A673 (cell line): ENCODE measurements at regions of chr1 and their contacts with region 1.

Region 1: GRCh38 chr1:115807723-115808122 is 33.2 kb downstream of the NHLH2 start:
- DNase-seq: peak; percentile 85
- H3K4me3 ChIP-seq: no peak overlapping the region
- H3K27ac ChIP-seq: no peak overlapping the region
- H3K4me1 ChIP-seq: no peaks in the 10 kb centered on the region
- H3K27me3 ChIP-seq: no peaks in the 10 kb centered on the region
- CTCF ChIP-seq: peak; percentile 82

Region 2: DNA sequence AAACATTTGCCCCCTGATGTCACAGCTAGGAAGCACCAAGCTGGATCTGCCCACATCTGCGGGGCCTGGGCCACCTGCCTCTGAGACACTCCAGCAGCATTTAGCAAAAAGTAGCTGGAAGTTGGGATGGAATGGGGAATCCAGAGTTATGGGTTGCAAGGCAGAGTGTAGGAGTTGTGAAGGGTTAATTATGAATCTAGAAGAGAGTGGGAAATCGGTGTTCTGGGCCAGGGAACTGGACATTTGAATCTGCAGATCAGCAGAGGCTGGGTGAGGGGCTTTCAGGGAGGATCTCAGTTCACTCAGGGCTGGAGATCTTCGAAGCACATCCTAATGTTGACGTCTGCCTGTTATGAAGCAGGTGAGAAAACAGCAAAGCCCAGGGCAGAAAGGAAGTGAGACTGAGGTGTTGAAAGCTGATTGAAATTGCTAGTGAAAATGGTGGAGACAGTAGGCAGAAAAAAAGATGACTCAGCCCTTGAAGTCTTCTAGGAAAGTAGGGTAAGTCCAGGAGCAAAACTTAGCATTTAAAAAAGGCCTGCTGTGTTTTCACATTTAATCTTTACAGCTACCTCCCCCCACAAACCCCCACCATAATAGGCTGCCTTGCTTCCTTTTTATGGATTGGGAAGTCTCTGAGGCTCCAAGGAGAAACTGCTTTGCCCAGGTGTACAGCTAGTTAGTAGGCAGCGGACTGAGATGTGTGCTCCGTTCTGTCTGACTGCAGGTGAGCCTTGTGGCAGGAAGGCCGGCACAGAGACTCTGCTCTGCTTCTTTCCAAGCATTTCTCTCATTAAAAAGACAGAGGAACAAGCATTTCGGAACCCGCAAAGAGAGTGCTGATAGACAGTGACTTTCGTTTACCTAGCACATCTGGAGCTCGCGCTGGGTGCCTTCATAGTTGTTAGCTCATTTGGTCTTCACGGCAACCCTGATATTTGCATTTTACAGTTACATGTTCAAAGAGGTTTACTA is 158.7 kb before region 1 on chr1:
- CTCF ChIA-PET with region 1: no interaction called
- POLR2A ChIA-PET with region 1: interaction called, 14 read pairs
- intact Hi-C with region 1: no loop called
- DNase-seq: no peak
- H3K4me3 ChIP-seq: no peak overlapping the region
- H3K27ac ChIP-seq: peak overlapping the region; percentile 2
- H3K4me1 ChIP-seq: peaks cover 31% of the 10 kb centered on the region
- H3K27me3 ChIP-seq: no peaks in the 10 kb centered on the region
- CTCF ChIP-seq: no peak

Region 3: GRCh38 chr1:115748401-115749150 is 59.1 kb before region 1 on chr1:
- CTCF ChIA-PET with region 1: no interaction called
- POLR2A ChIA-PET with region 1: no interaction called
- intact Hi-C with region 1: no loop called
- DNase-seq: no peak
- H3K4me3 ChIP-seq: no peak overlapping the region
- H3K27ac ChIP-seq: no peak overlapping the region
- H3K4me1 ChIP-seq: no peaks in the 10 kb centered on the region
- H3K27me3 ChIP-seq: peaks cover 5% of the 10 kb centered on the region
- CTCF ChIP-seq: no peak

Region 4: GRCh38 chr1:115980998-115981993 is 173.6 kb after region 1 on chr1:
- CTCF ChIA-PET with region 1: interaction called, 4 read pairs
- POLR2A ChIA-PET with region 1: no interaction called
- intact Hi-C with region 1: loop called (anchors 1 kb)
- DNase-seq: peak; percentile 70
- H3K4me3 ChIP-seq: no peak overlapping the region
- H3K27ac ChIP-seq: no peak overlapping the region
- H3K4me1 ChIP-seq: no peaks in the 10 kb centered on the region
- H3K27me3 ChIP-seq: no peaks in the 10 kb centered on the region
- CTCF ChIP-seq: peak; percentile 82

Region 5: DNA sequence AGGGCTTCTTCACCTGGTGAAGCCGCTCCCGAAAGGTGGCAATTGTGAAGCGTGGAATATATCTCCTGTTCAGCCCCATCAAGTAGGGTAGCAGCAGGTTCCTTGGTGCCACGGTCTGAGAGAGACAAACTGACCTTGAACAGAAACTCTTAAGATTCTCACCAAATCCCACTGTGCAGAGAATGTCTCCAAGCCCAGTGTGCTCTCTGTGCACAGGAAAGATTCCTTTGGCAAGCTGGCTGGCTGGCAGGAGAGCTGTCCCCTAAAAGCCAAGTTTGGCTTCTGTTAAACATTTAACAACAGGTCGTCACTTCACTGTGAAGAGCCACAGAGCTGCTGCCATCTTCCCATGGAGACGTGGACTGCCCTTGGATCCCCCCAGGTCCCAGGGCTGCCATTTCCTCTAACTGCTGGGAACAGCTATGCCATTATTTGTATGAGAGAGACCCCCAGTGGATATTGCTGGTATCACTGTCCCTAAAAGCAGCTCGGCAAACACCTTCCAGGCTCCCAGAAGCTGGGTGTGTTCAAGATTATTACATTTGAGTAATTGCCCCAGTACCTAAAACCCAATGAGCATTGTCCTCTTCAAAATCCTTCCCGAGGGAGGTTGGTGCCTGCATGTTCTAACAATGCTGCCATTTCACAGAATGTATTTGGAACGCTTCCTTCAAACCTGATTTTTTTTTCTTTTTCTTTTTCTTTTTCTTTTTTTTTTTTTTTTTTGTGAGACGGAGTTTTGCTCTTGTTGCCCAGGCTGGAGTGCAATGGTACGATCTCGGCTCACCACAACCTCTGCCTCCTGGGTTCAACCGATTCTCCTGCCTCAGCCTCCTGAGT is 691.3 kb after region 1 on chr1:
- CTCF ChIA-PET with region 1: interaction called, 6 read pairs
- POLR2A ChIA-PET with region 1: no interaction called
- intact Hi-C with region 1: loop called (anchors 5 kb)
- DNase-seq: peak; percentile 91
- H3K4me3 ChIP-seq: no peak overlapping the region
- H3K27ac ChIP-seq: peak overlapping the region; percentile 75
- H3K4me1 ChIP-seq: peaks cover 38% of the 10 kb centered on the region
- H3K27me3 ChIP-seq: no peaks in the 10 kb centered on the region
- CTCF ChIP-seq: peak; percentile 89